PC-9 (cell line): ENCODE measurements at regions of chr6 and their contacts with region 1.

Region 1: GRCh38 chr6:85354761-85355618 is 94.9 kb upstream of the NT5E start:
- DNase-seq: peak; percentile 49 to 71
- H3K4me3 ChIP-seq: no peak overlapping the region
- H3K27ac ChIP-seq: no peak overlapping the region
- H3K4me1 ChIP-seq: peaks cover 24% of the 10 kb centered on the region
- H3K27me3 ChIP-seq: no peaks in the 10 kb centered on the region
- CTCF ChIP-seq: peak; percentile 90

Region 2: GRCh38 chr6:85449818-85450759 is 95.1 kb after region 1 on chr6 and contains the start of gene NT5E:
- CTCF ChIA-PET with region 1: interaction called, 3 read pairs
- POLR2A ChIA-PET with region 1: interaction called, 10 read pairs
- intact Hi-C with region 1: no loop called
- DNase-seq: peak; percentile 71 to 88
- H3K4me3 ChIP-seq: peak within 1 kb of the TSS; percentile 94
- H3K27ac ChIP-seq: peak within 1 kb of the TSS; percentile 74
- H3K4me1 ChIP-seq: peaks cover 52% of the 10 kb centered on the region
- H3K27me3 ChIP-seq: no peaks in the 10 kb centered on the region
- CTCF ChIP-seq: no peak
- total RNA-seq, gene NT5E: 84.6 and 90.4 TPM in 2 replicates

Region 3: DNA sequence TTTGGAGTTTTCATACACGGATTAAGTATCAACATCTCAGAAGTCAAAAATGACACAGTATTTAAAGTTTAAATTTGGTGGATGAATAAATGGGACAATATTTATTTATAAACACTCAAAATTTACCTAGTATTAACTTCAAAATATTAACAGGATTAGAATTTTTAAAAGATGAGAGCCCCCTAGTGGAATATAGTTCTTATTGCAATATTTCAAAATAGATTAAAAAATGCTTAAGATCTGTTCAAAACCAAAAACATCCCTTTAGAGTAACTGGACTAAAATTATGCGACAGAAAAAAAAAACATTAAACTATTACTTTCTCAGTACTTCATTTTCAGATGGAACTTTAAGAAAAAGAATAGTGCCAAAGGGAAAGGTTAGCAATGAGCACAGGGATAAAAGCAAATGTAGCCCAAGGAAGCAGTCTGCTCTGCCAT is 182.1 kb after region 1 on chr6:
- CTCF ChIA-PET with region 1: interaction called, 4 read pairs
- POLR2A ChIA-PET with region 1: no interaction called
- intact Hi-C with region 1: loop called (anchors 1 kb)
- DNase-seq: no peak
- H3K4me3 ChIP-seq: no peak overlapping the region
- H3K27ac ChIP-seq: peak overlapping the region; percentile 35; the same call in 1 of the 2 replicates
- H3K4me1 ChIP-seq: peaks cover 11% of the 10 kb centered on the region
- H3K27me3 ChIP-seq: no peaks in the 10 kb centered on the region
- CTCF ChIP-seq: peak; percentile 77

Region 4: GRCh38 chr6:85642774-85643536 is 288.0 kb after region 1 on chr6 and contains the start of gene SYNCRIP:
- CTCF ChIA-PET with region 1: no interaction called
- POLR2A ChIA-PET with region 1: interaction called, 12 read pairs
- intact Hi-C with region 1: no loop called
- DNase-seq: peak; percentile 81 to 98
- H3K4me3 ChIP-seq: peak within 1 kb of the TSS; percentile 91
- H3K27ac ChIP-seq: peak within 1 kb of the TSS; percentile 99
- H3K4me1 ChIP-seq: peaks cover 30% of the 10 kb centered on the region
- H3K27me3 ChIP-seq: no peaks in the 10 kb centered on the region
- CTCF ChIP-seq: no peak
- total RNA-seq, gene SYNCRIP: 73.7 and 103 TPM in 2 replicates